Kidney (tissue), 22 donors: ENCODE measurements at regions of chr10 and their contacts with region 1.

Region 1: GRCh38 chr10:6401562-6402348 is 178.3 kb downstream of the PRKCQ start:
- DNase-seq: peak; percentile 78 to 95 (median 87)
- H3K4me3 ChIP-seq: peak overlapping the region; percentile 23 to 69 (median 59)
- H3K27ac ChIP-seq: no peak overlapping the region
- H3K4me1 ChIP-seq: peaks cover 0 to 2% (median 0%) of the 10 kb centered on the region in 3 donors
- H3K27me3 ChIP-seq: no peaks in the 10 kb centered on the region
- CTCF ChIP-seq: peak; percentile 83

Region 2: DNA sequence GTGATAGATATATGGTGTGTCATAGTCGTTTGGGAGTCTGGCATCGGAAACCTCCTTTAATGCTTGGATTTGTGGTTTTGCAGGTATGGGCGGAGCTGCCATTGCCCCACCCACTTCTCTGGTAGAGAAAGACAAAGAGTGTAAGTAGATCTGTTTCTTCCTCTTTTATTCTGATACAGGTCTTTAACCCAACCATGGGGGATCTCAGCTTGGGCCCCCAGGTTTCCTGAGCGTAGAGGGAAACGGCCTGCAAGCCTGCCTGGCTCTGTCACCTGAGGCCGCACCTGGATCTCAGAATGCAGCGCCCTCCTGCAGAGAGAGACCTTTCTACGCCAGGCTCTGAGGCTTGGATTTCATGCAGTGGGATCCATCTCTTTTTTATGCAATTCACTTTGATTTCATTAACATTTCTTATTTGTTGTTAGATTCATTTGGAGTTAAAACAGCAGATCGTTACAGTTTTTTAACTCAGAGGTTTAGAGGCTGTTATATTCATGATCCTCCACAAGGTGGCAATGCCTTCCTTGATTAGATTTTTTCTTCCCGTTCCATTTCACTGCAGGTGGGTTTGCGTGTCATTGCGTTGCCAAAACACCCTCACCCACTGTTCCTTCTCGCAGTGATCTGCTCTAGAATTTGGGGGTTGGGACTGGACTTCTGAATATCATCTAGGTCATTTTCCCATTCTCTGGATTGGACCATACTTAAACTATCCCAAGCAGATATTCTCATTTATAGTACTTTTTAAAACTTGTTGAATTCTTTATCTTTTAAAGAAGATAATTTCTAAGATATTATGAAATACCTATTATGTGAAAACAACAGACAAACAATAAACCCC is 292.9 kb before region 1 on chr10:
- intact Hi-C with region 1: loop called (anchors 5 kb)
- DNase-seq: peak in 2 of 5 donors; percentile 61 to 66
- H3K4me3 ChIP-seq: no peak overlapping the region
- H3K27ac ChIP-seq: no peak overlapping the region
- H3K4me1 ChIP-seq: no peaks in the 10 kb centered on the region
- H3K27me3 ChIP-seq: no peaks in the 10 kb centered on the region
- CTCF ChIP-seq: peak; percentile 67

Region 3: DNA sequence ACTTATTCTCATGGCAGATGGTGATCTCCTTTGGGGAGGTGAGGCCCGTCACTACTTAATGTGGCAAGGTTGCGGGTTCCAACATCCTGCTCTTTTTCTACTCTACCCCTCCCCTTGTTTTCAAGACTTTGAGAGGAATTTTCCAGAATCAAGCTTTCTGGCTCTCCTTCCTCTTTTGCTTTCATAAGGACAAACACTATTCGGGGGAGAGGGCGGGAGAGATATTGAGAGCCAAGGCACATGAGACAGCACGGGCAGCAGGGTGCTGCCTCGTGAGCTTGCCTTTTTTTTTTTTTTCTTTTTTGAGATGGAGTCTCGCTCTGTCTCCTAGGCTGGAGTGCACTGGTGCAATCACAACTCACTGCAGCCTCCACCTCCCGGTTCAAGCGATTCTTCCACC is 205.9 kb before region 1 on chr10:
- intact Hi-C with region 1: loop called (anchors 10 kb)
- DNase-seq: no peak
- H3K4me3 ChIP-seq: no peak overlapping the region
- H3K27ac ChIP-seq: peak overlapping the region in 1 of 2 donors; percentile 69
- H3K4me1 ChIP-seq: peaks cover 0 to 7% (median 0%) of the 10 kb centered on the region in 3 donors
- H3K27me3 ChIP-seq: no peaks in the 10 kb centered on the region
- CTCF ChIP-seq: no peak

Region 4: DNA sequence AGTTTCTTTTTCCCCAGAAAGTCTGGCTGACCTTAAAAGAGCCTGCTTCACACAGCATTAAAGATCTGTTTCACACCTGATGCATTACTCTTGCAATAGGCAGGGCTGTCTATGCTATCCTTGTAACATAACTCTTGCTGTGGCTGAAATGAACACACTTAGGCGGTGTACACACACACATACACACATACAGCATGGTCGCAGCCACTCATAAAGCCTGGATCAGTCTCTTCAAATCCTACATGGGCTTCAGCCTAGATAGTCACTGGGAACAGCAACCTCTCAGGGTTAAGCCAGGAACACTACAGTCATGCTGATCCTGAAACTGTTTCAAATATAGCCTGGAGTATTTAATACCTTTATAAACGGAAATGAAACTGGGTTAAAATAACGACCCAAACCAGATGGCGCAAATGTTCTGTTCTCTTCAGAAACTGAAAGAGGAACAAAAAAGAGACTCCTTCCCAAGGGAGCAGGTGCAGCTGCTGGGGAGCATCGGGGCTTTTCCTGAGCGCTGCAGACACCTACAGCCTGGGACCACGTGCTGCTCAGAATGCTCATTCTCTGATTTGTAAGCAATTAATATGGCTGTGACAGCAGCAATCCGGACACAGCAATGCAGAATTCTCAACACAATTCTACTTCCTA is 1070.1 kb after region 1 on chr10:
- intact Hi-C with region 1: no loop called
- DNase-seq: no peak
- H3K4me3 ChIP-seq: no peak overlapping the region
- H3K27ac ChIP-seq: no peak overlapping the region
- H3K4me1 ChIP-seq: peaks cover 0 to 5% (median 5%) of the 10 kb centered on the region in 3 donors
- H3K27me3 ChIP-seq: peaks cover 6% of the 10 kb centered on the region
- CTCF ChIP-seq: no peak